Head of caudate nucleus (tissue), 42 donors: ENCODE measurements at regions of chr14 and their contacts with region 1.

Region 1: GRCh38 chr14:74945823-74946682 is 9.3 kb downstream of the PGF start:
- DNase-seq: peak; percentile 29 to 94 (median 82)

Region 2: DNA sequence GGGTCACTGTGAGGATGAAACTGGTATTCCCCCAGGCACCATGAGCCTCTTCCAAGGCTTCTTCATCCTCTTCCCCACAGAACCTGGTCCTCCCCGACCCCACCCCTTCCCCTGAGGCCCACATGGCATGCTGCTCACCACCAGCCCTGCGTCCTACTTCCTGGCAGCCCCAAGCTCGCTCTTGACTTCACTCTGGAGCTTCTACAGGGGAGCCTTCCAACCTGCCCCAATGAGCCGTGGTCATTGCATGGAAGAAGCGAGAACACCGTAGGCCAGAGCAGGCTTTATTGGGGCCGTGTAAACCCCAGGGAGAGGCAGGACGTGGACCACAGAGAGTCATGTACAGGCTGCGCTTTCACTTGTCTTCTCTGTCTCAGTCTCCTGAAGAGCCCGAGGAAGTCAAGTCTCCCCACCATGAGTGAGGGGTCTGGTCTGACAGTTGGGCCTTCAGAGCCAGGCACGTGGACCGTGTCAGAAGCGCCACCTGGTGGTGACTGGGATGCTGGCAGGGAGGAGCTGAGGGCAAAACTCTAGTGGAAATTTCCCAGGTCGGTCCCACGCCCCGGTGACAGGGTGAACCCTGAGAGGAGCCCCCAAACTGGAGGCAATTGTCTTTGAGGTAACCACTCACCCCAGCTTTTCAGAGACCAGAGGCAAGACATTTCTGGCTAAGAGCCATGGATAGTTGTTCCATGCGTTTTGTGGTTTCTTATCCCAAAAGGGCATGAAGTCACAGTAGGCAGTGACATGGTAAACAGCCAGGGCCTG is 40.5 kb before region 1 on chr14:
- intact Hi-C with region 1: no loop called
- DNase-seq: peak; percentile 47 to 93 (median 82)

Region 3: GRCh38 chr14:75084513-75084912 is 138.5 kb after region 1 on chr14:
- intact Hi-C with region 1: loop called (anchors 5 kb)
- DNase-seq: peak in 11 of 42 donors; percentile 13 to 64 (median 30)